Body of pancreas (tissue), 4 donors: ENCODE measurements at regions of chr2 and their contacts with region 1.

Region 1: DNA sequence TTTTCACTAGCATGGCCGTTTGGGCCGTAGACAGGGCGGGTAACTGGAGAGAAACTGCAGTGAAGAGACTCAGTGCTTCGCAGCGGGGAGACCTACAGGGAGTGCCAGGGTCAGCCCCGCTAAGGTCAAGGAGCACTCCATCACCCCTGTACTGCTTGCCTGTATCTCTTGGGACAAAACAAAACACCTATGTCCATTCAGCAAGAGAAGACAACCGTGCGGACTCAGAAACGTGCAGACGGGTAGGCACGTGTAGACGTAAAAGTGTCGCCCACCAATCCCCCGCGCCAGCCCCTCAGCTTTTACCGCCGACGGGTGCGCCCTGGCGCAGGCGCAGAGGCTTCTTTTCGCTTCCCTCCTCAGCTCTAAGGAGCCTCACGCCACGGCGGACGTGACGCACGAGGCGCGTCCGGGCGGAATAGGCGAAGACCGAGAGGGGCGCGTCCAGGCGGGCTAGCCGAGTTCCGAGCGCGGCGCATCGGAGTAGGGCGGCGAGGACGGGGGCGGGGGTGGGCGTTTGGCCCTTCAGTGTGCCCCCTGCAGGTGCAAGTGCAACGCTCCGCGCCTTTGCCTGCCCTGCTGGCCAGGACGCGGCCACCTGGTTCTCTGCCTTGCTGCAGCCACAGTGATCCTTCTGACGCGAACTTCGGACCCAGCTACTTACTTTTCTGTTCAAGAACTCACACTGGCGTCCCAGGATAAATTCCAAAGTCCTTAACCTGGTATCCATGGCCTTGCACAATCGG is 3.3 kb upstream of the SOS1 start:
- DNase-seq: peak; percentile 92 to 97 (median 96)
- ATAC-seq: peak; percentile 84
- H3K4me3 ChIP-seq: peak overlapping the region; percentile 49 to 64
- H3K27ac ChIP-seq: peak overlapping the region; percentile 86 to 91 (median 87)
- H3K4me1 ChIP-seq: peaks cover 33% of the 10 kb centered on the region
- H3K27me3 ChIP-seq: no peaks in the 10 kb centered on the region
- CTCF ChIP-seq: peak; percentile 34 to 70 (median 63)
- POLR2A ChIP-seq: peak; percentile 29 to 82 (median 70)

Region 2: GRCh38 chr2:38991899-38992298 is 132.3 kb before region 1 on chr2:
- intact Hi-C with region 1: no loop called
- DNase-seq: no peak
- ATAC-seq: no peak
- H3K4me3 ChIP-seq: no peak overlapping the region
- H3K27ac ChIP-seq: no peak overlapping the region
- H3K4me1 ChIP-seq: no peaks in the 10 kb centered on the region
- H3K27me3 ChIP-seq: no peaks in the 10 kb centered on the region
- CTCF ChIP-seq: no peak
- POLR2A ChIP-seq: no peak

Region 3: DNA sequence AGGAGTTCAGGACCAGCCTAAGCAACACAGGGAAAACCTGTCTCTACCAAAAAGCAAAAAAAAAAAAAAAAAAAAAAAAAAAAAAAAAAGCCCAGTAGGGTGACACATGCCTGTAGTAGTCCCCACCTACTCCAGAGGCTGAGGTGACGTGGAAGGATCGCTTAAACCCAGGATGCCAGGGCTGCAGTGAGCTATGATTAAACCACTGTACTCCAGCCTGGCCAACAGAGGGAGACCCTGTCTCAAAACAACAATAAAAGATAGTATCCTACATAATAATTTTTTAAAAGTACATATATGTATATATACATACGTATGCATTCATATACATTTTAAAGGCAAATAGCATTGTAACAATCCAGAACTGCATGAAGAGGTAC is 55.0 kb before region 1 on chr2:
- intact Hi-C with region 1: no loop called
- DNase-seq: no peak
- ATAC-seq: no peak
- H3K4me3 ChIP-seq: no peak overlapping the region
- H3K27ac ChIP-seq: no peak overlapping the region
- H3K4me1 ChIP-seq: no peaks in the 10 kb centered on the region
- H3K27me3 ChIP-seq: no peaks in the 10 kb centered on the region
- CTCF ChIP-seq: no peak
- POLR2A ChIP-seq: no peak

Region 4: GRCh38 chr2:39227628-39228412 is 103.6 kb after region 1 on chr2:
- intact Hi-C with region 1: loop called (anchors 10 kb)
- DNase-seq: peak; percentile 81 to 84 (median 82)
- ATAC-seq: peak; percentile 79
- H3K4me3 ChIP-seq: no peak overlapping the region
- H3K27ac ChIP-seq: no peak overlapping the region
- H3K4me1 ChIP-seq: peaks cover 9% of the 10 kb centered on the region
- H3K27me3 ChIP-seq: no peaks in the 10 kb centered on the region
- CTCF ChIP-seq: peak; percentile 79 to 87 (median 82)
- POLR2A ChIP-seq: no peak

Region 5: GRCh38 chr2:39313575-39313974 is 189.4 kb after region 1 on chr2:
- intact Hi-C with region 1: no loop called
- DNase-seq: no peak
- ATAC-seq: no peak
- H3K4me3 ChIP-seq: no peak overlapping the region
- H3K27ac ChIP-seq: no peak overlapping the region
- H3K4me1 ChIP-seq: no peaks in the 10 kb centered on the region
- H3K27me3 ChIP-seq: no peaks in the 10 kb centered on the region
- CTCF ChIP-seq: no peak
- POLR2A ChIP-seq: no peak

Region 6: DNA sequence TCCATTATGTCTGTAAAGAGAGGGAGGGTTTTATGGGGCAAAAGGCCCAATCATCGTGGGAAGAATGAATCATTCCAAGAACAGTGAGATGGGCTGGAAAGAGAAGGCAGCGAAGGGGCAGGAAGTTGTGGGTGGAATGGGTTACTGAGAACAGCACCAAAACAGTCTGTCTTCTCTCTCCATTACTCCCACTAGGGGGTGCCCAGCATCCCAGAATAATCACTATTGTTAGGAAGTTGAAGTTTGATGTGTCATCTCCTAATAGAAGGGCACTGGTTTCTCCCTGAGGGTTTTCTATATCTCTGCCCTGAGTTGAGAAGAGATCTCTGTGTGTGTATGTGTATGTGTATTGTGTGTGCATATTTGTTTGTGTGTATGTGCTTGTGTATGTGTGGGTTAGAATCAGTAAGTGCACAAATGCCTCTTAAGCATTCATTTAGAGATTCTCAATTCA is 389.5 kb after region 1 on chr2:
- intact Hi-C with region 1: no loop called
- DNase-seq: peak; percentile 44 to 76 (median 60)
- ATAC-seq: peak; percentile 67
- H3K4me3 ChIP-seq: no peak overlapping the region
- H3K27ac ChIP-seq: peak overlapping the region in 1 of 4 donors; percentile 47
- H3K4me1 ChIP-seq: peaks cover 59% of the 10 kb centered on the region
- H3K27me3 ChIP-seq: no peaks in the 10 kb centered on the region
- CTCF ChIP-seq: peak; percentile 6 to 69 (median 54)
- POLR2A ChIP-seq: no peak